ENCODE measurements at regions of chr5 and their contacts with region 1.

Region 1: DNA sequence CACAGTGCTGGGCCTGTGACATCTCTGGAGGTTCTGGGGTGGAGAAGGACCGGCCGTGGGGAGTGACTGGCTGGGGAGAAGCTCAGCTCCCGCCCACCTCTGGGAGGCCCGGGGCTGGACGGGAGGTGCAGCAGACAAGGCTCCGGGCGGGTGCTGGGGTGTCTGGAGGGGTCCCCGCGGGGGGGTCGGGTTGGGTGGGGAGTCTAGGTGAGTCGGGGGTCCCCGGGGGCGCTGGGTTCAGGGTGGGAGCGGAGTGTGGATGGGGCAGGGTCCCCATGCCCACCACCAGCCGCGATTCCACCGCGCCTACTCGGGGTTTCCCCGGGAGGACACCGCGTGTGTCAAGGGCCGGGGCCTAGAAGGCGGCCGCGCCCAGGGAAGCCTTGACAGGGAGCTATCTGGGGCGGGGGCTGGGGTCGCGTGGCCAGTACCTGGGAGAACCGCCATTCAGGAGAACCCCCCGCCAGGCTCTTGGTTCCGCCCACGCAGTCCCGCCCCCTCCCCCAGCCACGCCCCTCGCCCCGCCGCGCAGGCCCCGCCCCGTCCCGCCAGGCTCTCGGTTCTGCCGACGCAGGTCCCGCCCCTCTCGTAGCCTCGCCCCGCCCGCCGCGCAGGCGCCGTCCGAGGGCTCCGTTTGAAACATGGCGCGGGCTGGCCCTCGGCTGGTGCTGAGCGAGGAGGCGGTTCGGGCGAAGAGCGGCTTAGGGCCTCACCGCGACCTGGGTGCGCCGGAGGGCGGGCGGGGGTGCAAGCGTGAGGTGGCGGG is at the start of gene CEP72:
- DNase-seq: peak; percentile 94
- H3K4me3 ChIP-seq: peak within 1 kb of the TSS; percentile 67 to 95 (median 86)
- H3K27ac ChIP-seq: peak within 1 kb of the TSS; percentile 20 to 60 (median 40)
- H3K4me1 ChIP-seq: peaks cover 0 to 18% (median 10%) of the 10 kb centered on the region in 4 donors
- H3K27me3 ChIP-seq: peaks cover 0 to 7% (median 0%) of the 10 kb centered on the region in 3 donors
- CTCF ChIP-seq: no peak
- EP300 ChIP-seq: no peak
- POLR2A ChIP-seq: no peak
- total RNA-seq, gene CEP72: 0.36 to 5.0 (median 1.4) TPM

Region 2: DNA sequence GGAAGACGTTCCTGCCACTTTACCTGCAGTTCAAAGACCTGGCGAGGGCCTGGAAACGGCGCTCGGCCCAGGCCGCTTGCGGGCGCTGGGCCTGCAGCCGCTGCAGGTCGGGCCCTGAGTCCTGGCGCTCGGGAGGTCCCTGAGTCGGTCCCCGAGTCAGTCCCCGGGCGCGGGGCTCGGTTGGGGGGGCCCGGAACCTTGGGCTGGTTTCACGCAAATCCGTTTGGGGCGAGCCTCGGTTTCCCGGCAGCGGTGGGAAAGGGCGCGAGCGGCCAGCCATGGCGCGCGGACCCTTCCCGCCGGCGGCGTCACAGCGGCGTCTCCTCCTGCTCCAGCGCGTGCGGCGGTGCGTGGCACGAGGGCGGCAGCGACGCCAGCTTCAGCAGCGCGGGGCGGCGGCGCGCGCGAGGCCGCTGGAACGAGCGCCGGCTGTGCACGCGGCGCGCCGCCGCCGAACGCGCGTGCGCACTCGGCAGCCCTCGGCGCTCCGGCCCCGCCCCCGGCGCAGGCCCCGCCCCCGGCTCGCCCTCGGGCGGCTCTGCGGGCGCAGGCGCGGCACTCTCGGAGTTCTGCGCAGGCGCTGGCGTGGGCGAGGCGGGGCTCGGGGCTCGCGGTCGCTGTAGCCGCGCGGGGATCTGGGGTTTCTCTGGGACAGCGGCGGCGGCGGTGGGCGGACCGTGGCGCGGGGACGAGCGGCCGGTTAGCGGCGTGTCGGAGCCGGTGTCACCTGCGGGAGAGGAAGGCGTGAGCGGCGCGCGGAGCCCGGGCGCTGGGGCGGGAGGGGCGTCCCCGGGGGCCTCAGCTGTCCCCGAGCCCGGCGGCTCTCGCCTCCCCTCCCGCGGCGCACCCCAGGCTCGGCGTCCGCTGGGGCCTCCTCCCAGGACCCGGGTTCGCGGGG is 139.0 kb before region 1 on chr5:
- intact Hi-C with region 1: loop called (anchors 10 kb)
- DNase-seq: peak; percentile 90
- H3K4me3 ChIP-seq: peak overlapping the region; percentile 60 to 99 (median 88)
- H3K27ac ChIP-seq: peak overlapping the region; percentile 79 to 83 (median 80)
- H3K4me1 ChIP-seq: peaks cover 0 to 31% (median 23%) of the 10 kb centered on the region in 4 donors
- H3K27me3 ChIP-seq: peaks cover 22 to 33% (median 30%) of the 10 kb centered on the region in 3 donors
- CTCF ChIP-seq: no peak
- EP300 ChIP-seq: no peak
- POLR2A ChIP-seq: no peak

Region 3: DNA sequence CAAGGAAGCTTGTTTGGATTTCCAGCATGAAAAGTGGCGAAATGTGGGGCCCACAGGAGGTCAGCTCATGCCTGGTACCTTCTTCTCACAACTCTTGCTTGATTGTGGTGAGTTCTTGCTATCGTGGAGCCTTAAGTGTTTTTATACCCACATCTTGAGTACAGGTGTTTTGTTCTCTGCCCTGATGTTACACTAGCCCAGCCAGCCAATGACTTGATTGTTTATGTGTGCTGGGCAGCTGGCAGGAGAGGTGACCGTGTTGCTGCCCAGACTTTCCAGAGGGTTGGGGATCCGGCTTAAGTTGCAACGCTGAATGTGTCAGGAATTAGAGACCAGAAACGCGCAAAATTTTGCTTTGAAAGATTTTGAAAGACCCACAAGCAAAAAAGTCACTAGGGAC is 105.2 kb after region 1 on chr5:
- intact Hi-C with region 1: no loop called
- DNase-seq: no peak
- H3K4me3 ChIP-seq: no peak overlapping the region
- H3K27ac ChIP-seq: no peak overlapping the region
- H3K4me1 ChIP-seq: no peaks in the 10 kb centered on the region
- H3K27me3 ChIP-seq: no peaks in the 10 kb centered on the region
- CTCF ChIP-seq: no peak
- EP300 ChIP-seq: no peak
- POLR2A ChIP-seq: no peak

Measured in sigmoid colon (tissue), 7 donors.